Naive thymus-derived CD4-positive, alpha-beta T cell (primary cell): ENCODE measurements at regions of chrX and their contacts with region 1.

Region 1: DNA sequence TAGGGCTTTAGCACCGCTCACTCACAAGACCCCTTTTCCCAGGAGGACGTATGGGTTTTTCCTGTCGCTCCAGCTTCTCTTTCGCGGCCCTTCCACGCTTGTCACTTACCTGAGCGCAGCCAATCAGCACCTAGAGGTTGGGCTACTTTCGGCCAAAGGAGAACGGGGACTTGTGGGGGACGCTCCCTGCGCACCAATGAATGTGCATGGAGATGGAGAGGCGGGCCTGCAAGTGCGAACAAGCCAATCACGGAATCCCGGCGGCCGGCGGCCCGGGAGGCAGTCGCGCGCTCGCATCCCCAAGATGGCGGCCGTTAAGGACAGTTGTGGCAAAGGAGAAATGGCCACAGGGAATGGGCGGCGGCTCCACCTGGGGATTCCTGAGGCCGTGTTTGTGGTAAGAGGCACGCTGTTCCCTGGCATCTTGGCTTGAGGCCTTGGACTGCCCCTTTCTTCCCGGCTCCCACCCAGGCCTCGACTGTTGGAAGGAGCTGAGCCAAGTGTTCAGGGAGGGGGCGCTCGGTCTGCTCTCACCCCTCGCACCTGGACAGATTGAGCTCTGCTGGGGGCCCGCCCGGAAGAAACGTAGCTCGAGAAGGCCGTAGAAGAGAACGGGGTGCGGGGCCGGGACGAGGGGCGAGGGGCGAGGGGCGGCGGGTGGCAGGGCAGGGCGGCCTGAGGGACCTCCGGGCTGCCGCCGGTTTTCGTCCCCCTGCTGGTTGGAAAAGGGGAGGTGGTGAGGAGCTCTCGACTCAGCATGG is at the start of gene VBP1:
- DNase-seq: peak; percentile 61 to 89 (median 84)
- ATAC-seq: peak; percentile 99
- H3K4me3 ChIP-seq: peak within 1 kb of the TSS; percentile 73
- H3K4me3 Mint-ChIP-seq: peak within 1 kb of the TSS; percentile 86 to 98 (median 96)
- H3K27ac ChIP-seq: peak within 1 kb of the TSS; percentile 79
- H3K27ac Mint-ChIP-seq: peak within 1 kb of the TSS; percentile 76 to 96 (median 91)
- H3K4me1 ChIP-seq: peaks cover 8 to 16% of the 10 kb centered on the region in 2 donors
- H3K4me1 Mint-ChIP-seq: peaks cover 10 to 36% (median 26%) of the 10 kb centered on the region in 7 donors
- H3K27me3 ChIP-seq: no peaks in the 10 kb centered on the region
- H3K27me3 Mint-ChIP-seq: no peaks in the 10 kb centered on the region
- total RNA-seq, gene VBP1: 17.3 to 57.4 (median 26.4) TPM

Region 2: DNA sequence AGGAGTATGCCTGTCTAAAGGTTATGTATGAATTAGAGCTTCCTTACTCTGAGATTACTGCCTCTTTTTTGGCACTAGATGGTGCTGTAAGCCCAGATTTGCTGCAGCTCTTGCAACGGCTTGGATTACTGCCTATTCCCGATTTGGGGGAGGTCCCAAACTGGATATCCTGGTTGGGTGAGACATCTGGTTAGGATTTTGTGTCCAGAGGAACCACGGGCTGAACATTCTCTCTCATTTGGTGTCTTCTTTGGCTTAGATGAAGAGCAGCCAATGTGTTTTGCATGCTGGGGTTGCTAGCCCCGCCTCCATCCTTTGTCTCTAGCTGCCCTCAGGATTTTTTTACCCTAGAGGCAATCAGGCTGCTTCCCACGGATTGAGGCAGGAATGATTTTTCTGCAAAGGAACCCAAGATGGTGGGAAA is 298.3 kb before region 1 on chrX:
- CTCF ChIA-PET with region 1: no interaction called
- POLR2A ChIA-PET with region 1: no interaction called
- intact Hi-C with region 1: no loop called
- DNase-seq: peak; percentile 3 to 45 (median 20)
- ATAC-seq: no peak
- H3K4me3 ChIP-seq: no peak overlapping the region
- H3K4me3 Mint-ChIP-seq: peak overlapping the region; percentile 43 to 79 (median 69)
- H3K27ac ChIP-seq: no peak overlapping the region
- H3K27ac Mint-ChIP-seq: peak overlapping the region in 1 of 9 donors; percentile 13
- H3K4me1 ChIP-seq: no peaks in the 10 kb centered on the region
- H3K4me1 Mint-ChIP-seq: peaks cover 0 to 7% (median 0%) of the 10 kb centered on the region in 7 donors
- H3K27me3 ChIP-seq: no peaks in the 10 kb centered on the region
- H3K27me3 Mint-ChIP-seq: peaks cover 0 to 14% (median 10%) of the 10 kb centered on the region in 5 donors

Region 3: GRCh38 chrX:155070975-155071693 is 145.2 kb before region 1 on chrX and contains the starts of genes BRCC3, CMC4 and MTCP1:
- CTCF ChIA-PET with region 1: no interaction called
- POLR2A ChIA-PET with region 1: interaction called, 3 read pairs
- intact Hi-C with region 1: loop called in 1 of 2 experiments (anchors 1 kb)
- DNase-seq: peak; percentile 62 to 77 (median 74)
- ATAC-seq: peak; percentile 90
- H3K4me3 ChIP-seq: peak within 1 kb of the TSS; percentile 76
- H3K4me3 Mint-ChIP-seq: peak within 1 kb of the TSS; percentile 81 to 94 (median 89)
- H3K27ac ChIP-seq: peak within 1 kb of the TSS; percentile 82
- H3K27ac Mint-ChIP-seq: peak within 1 kb of the TSS; percentile 83 to 96 (median 94)
- H3K4me1 ChIP-seq: peaks cover 6 to 12% of the 10 kb centered on the region in 2 donors
- H3K4me1 Mint-ChIP-seq: peaks cover 30 to 62% (median 54%) of the 10 kb centered on the region in 7 donors
- H3K27me3 ChIP-seq: no peaks in the 10 kb centered on the region
- H3K27me3 Mint-ChIP-seq: no peaks in the 10 kb centered on the region
- total RNA-seq, gene BRCC3: 11.5 to 27.8 (median 15.2) TPM
- total RNA-seq, gene CMC4: 3.1 to 6.0 (median 5.1) TPM
- total RNA-seq, gene MTCP1: 10.3 to 21.5 (median 17.1) TPM

Region 4: GRCh38 chrX:155148724-155149537 is 67.4 kb before region 1 on chrX:
- CTCF ChIA-PET with region 1: no interaction called
- POLR2A ChIA-PET with region 1: no interaction called
- intact Hi-C with region 1: loop called in 1 of 2 experiments (anchors 5 kb)
- DNase-seq: peak in 8 of 9 donors; percentile 3 to 38 (median 25)
- ATAC-seq: peak; percentile 37
- H3K4me3 ChIP-seq: no peak overlapping the region
- H3K4me3 Mint-ChIP-seq: no peak overlapping the region
- H3K27ac ChIP-seq: no peak overlapping the region
- H3K27ac Mint-ChIP-seq: peak overlapping the region in 3 of 9 donors; percentile 38 to 73 (median 40)
- H3K4me1 ChIP-seq: no peaks in the 10 kb centered on the region
- H3K4me1 Mint-ChIP-seq: peaks cover 0 to 9% (median 4%) of the 10 kb centered on the region in 7 donors
- H3K27me3 ChIP-seq: no peaks in the 10 kb centered on the region
- H3K27me3 Mint-ChIP-seq: peaks cover 0 to 11% (median 0%) of the 10 kb centered on the region in 5 donors

Region 5: DNA sequence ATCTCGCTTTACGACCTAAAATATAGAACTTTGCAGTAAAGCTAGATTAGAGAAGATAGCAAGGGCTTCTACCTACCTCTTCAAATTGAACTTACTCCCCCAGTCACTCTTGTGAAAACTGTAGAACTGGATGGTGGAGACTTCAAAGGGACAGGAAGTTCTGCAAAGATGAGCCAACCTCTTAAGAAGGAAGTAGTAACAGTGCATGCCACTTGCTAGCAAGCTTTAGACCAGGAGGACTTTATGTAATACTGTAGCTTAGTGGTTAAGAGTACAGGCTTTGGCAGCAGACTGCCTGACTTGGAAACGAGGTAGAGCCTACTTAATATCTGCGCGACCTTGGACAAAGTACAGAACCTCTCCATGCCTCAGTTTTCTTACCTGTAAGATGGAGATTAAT is 27.6 kb before region 1 on chrX:
- CTCF ChIA-PET with region 1: interaction called, 7 read pairs
- POLR2A ChIA-PET with region 1: interaction called, 11 read pairs
- intact Hi-C with region 1: loop called (anchors 1 kb)
- DNase-seq: peak in 7 of 9 donors; percentile 43 to 75 (median 65)
- ATAC-seq: peak; percentile 99
- H3K4me3 ChIP-seq: peak overlapping the region; percentile 29
- H3K4me3 Mint-ChIP-seq: peak overlapping the region; percentile 40 to 75 (median 68)
- H3K27ac ChIP-seq: peak overlapping the region; percentile 33
- H3K27ac Mint-ChIP-seq: peak overlapping the region; percentile 56 to 92 (median 79)
- H3K4me1 ChIP-seq: peaks cover 8 to 24% of the 10 kb centered on the region in 2 donors
- H3K4me1 Mint-ChIP-seq: peaks cover 11 to 62% (median 48%) of the 10 kb centered on the region in 7 donors
- H3K27me3 ChIP-seq: no peaks in the 10 kb centered on the region
- H3K27me3 Mint-ChIP-seq: no peaks in the 10 kb centered on the region

Region 6: DNA sequence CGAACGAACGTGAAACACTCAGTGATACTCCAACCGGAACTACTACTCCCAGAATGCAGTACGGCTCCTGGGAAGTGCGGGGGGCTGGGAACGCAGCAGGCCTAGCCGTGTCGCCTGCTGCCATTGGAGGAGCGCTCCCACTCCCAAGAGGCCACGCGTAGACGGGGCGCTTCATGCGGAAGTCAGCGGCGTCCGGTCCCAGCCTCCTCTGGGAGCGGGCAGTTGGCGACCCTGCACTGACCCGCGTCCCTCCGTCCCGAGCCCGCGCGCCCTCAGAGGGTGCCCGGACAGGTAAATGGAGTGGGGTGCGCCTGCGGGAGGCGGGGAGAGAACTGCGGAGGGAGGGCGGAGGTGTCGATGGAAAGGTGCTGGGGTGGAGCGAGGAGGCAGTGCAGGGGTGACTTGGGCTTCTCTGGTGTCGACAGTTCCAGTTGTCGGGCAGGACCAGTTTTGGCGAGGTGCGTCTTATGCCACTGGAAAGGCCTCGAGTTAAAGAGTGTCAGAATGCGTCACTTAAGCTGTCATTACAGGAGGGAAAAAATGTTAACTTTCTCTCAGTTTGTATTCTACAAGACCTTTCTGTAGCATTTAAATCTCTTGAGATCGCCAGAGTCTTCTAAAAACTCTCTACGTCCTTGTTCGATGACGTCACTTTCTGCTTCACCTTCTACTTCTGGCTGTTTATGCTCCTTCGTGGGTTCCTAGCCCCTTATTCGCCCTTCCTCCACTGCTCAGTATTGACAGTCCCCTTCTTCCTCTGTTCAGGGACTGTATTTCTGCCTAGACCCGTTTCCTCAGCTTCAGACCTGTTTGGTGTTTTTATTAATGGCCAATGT is 665.0 kb after region 1 on chrX and contains the start of gene VAMP7:
- CTCF ChIA-PET with region 1: no interaction called
- POLR2A ChIA-PET with region 1: no interaction called
- intact Hi-C with region 1: loop called in 1 of 2 experiments (anchors 1 kb)
- DNase-seq: peak; percentile 47 to 82 (median 71)
- ATAC-seq: peak; percentile 99
- H3K4me3 ChIP-seq: peak within 1 kb of the TSS; percentile 55
- H3K4me3 Mint-ChIP-seq: peak within 1 kb of the TSS; percentile 86 to 97 (median 92)
- H3K27ac ChIP-seq: peak within 1 kb of the TSS; percentile 78
- H3K27ac Mint-ChIP-seq: peak within 1 kb of the TSS; percentile 63 to 98 (median 92)
- H3K4me1 ChIP-seq: peaks cover 0 to 5% of the 10 kb centered on the region in 2 donors
- H3K4me1 Mint-ChIP-seq: peaks cover 19 to 40% (median 34%) of the 10 kb centered on the region in 7 donors
- H3K27me3 ChIP-seq: no peaks in the 10 kb centered on the region
- H3K27me3 Mint-ChIP-seq: peaks cover 0 to 6% (median 4%) of the 10 kb centered on the region in 5 donors
- total RNA-seq, gene VAMP7: 18.5 to 32.5 (median 21.0) TPM